ENCODE measurements at regions of chr2 and their contacts with region 1.

Region 1: DNA sequence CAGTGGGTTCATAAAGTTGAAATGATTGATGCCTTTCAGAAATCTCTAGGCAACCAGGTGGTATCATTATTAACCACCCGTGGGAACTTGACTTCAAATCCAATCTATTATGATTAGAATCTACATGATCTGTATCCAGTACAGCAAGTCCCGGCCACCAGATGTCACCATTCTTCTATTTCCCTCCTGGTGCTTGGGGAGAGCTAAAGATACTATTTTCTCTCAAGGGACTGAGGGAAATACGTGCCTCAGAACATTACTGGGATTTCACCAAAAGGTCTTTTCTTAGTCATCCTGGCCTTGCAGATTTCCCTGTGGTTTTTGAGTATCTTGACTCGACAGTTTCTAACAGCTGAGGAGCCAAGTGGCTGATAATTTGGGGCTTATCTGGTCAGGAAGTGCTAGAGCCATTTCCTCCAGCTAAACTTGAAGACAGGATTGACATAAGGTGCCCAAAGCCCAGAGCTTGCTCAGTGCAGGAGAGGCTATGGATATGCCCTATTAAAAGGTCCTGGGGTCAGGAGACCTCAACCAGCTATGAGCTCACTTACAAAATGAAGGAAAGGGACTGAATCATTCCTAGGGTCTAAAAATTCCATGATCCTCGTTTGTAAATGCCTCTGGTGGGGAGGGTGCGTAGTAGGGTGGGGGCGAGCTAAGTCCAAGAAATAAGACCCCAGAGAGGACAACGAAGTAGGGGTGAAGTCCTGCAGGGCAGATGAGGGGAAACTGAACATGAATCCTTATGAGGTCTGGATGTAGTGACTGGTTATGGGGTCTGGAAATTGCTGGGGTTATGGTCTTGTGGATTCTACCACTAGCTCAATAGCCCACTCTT is 135.4 kb upstream of the MGAT5 start:
- DNase-seq: peak; percentile 89
- H3K4me3 ChIP-seq: no peak overlapping the region
- H3K27ac ChIP-seq: peak overlapping the region in 1 of 2 donors; percentile 17
- H3K4me1 ChIP-seq: peaks cover 2% of the 10 kb centered on the region
- H3K27me3 ChIP-seq: no peaks in the 10 kb centered on the region
- CTCF ChIP-seq: peak; percentile 66 to 87 (median 86)
- POLR2A ChIP-seq: no peak

Region 2: GRCh38 chr2:133886735-133887660 is 231.5 kb before region 1 on chr2:
- intact Hi-C with region 1: loop called (anchors 5 kb)
- DNase-seq: peak; percentile 71
- H3K4me3 ChIP-seq: no peak overlapping the region
- H3K27ac ChIP-seq: no peak overlapping the region
- H3K4me1 ChIP-seq: no peaks in the 10 kb centered on the region
- H3K27me3 ChIP-seq: no peaks in the 10 kb centered on the region
- CTCF ChIP-seq: peak in 3 of 4 experiments; percentile 47 to 57 (median 56)
- POLR2A ChIP-seq: no peak

Region 3: DNA sequence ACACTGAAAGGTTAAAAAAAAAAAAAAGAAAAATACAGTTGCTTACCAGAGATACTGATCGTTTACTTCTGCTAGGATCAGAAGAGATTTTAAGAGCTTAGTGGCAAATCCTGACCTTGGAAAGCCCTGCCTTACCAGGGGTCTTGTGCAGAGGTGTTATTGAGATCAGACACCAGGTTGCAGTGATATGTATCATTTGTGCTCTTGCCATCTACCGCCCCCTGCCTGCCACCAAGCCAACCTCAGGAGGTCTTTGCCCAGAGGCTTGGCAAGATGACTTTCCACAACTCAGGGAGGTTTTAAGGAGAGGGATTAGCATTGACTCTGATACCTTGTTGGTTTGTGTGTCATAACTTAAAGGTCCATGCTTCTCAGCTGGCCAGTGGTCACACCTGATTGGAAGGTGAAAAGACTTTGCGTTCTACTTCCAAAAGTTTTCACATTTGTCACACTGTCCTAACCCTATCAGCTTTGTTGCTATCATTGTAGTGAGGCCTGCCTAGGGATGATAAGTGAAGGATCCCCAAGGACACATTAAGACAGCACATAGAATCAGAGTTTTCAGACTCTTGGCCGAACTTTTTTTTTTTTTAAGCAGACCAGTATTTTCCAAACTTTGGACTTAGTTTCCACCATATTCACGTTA is 89.2 kb after region 1 on chr2:
- intact Hi-C with region 1: loop called (anchors 5 kb)
- DNase-seq: peak; percentile 29
- H3K4me3 ChIP-seq: no peak overlapping the region
- H3K27ac ChIP-seq: no peak overlapping the region
- H3K4me1 ChIP-seq: no peaks in the 10 kb centered on the region
- H3K27me3 ChIP-seq: no peaks in the 10 kb centered on the region
- CTCF ChIP-seq: peak; percentile 13 to 61 (median 56)
- POLR2A ChIP-seq: no peak

Region 4: DNA sequence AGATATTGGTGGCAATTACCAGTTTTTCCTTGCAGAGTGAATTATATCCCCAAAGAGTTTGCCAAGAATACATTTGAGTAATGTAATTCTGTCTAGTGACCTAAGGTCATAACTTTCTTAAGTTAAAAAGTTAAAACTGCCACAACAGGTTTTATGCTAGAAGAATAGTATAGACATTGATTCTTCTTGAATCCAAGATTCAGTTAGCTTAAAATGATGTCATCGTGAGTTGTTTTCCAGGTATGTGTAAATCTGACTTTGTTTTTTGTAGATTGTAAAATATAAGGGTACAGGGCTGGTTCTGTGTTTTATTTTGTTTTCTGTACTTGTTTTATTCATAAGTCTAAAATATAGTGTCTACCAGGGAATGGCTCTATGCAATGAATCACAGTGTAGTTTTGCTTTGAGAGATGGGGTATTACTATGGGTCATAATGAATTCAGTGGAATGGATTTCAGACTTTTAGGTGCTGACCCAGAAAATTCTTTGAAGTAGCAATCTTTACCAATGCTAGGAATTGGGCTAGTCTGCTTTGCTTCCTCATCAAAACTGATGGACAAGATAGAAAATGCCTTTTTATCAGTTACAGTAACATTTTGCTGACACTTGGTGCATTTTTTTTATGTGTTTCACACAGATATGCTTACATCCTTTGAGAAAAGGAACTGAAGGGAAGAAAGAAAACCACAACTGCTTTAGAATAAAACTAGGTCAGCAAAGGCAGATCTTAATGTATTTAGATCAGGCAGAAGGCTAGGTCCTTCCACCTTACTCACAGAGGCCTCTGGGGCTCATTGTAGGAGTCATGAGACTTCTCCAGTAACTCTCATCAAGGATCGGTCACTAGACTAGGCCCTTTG is 114.6 kb after region 1 on chr2:
- intact Hi-C with region 1: no loop called
- DNase-seq: no peak
- H3K4me3 ChIP-seq: no peak overlapping the region
- H3K27ac ChIP-seq: no peak overlapping the region
- H3K4me1 ChIP-seq: no peaks in the 10 kb centered on the region
- H3K27me3 ChIP-seq: no peaks in the 10 kb centered on the region
- CTCF ChIP-seq: no peak
- POLR2A ChIP-seq: no peak

Region 5: DNA sequence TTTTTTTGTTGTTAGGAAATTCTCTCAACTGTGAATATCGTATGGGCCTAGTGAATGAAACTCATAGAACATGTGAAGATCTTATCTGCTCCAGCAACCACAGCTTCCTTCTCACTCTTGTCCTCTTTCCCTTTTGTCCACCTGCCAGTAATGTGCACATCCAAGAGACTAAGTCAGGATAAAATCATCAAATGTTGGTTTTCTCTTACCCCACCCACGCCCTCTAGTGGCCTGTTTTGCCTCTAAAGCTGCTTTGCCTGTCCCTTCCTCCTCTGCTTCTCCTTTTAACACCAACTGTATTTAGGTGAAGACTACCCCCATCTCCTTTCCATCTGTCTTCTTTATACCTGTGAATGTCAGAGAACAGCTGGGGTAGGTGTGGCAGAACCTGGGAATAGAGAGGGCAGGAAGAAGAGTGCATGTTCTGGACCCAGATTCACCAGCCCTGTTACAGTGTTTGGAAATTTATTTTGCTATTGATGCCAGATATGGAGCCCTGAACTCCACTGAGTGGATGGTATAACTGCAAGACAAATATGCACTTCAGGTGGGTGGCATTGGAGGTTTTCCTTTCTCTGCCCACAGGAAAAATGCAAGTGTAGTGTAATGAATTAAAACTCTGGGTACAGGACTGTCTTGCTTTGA is 127.0 kb after region 1 on chr2:
- intact Hi-C with region 1: loop called (anchors 5 kb)
- DNase-seq: peak; percentile 76
- H3K4me3 ChIP-seq: no peak overlapping the region
- H3K27ac ChIP-seq: no peak overlapping the region
- H3K4me1 ChIP-seq: no peaks in the 10 kb centered on the region
- H3K27me3 ChIP-seq: no peaks in the 10 kb centered on the region
- CTCF ChIP-seq: peak; percentile 51 to 69 (median 64)
- POLR2A ChIP-seq: no peak

Region 6: DNA sequence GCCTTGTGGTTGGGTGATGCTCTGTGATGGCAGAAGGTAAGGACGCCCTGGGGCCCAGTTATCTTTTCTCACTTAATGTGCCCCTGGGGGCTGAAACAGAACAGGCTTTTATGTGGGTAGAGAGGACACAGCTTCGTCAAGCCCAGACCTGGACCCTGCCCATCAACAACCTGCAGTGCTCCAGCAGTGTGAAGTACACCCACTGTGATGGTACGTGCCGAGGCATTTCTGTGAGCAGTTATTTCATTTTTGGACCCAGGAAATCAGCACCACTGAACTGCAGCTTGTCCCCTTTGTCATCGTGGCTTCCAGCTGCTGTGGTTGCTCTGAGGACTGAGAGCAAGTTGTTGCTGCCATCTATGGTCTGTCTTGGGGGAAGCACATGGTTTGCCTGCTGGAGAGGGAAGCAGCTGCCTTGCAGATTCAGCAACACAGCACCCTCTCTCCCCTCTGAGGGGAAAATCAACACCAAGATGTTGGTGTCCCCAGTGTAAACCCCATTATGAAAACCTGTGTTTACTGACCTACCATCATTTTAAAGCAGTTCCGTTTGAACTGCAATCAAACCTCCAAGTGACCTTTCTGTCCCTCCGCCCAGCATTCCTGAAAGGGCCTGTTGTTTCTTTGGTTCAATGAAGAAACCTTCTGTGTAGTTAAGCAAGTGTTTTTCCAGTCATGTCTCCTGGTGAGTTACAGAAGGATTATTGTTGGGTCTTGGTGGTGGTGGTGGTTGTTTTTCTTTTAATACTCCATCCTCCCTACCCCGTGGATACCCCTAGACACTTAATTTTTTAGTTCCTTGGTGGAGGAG is 293.5 kb after region 1 on chr2:
- intact Hi-C with region 1: loop called (anchors 1 kb)
- DNase-seq: peak; percentile 58
- H3K4me3 ChIP-seq: no peak overlapping the region
- H3K27ac ChIP-seq: no peak overlapping the region
- H3K4me1 ChIP-seq: no peaks in the 10 kb centered on the region
- H3K27me3 ChIP-seq: no peaks in the 10 kb centered on the region
- CTCF ChIP-seq: peak in 3 of 4 experiments; percentile 31 to 66 (median 63)
- POLR2A ChIP-seq: no peak

Region 7: DNA sequence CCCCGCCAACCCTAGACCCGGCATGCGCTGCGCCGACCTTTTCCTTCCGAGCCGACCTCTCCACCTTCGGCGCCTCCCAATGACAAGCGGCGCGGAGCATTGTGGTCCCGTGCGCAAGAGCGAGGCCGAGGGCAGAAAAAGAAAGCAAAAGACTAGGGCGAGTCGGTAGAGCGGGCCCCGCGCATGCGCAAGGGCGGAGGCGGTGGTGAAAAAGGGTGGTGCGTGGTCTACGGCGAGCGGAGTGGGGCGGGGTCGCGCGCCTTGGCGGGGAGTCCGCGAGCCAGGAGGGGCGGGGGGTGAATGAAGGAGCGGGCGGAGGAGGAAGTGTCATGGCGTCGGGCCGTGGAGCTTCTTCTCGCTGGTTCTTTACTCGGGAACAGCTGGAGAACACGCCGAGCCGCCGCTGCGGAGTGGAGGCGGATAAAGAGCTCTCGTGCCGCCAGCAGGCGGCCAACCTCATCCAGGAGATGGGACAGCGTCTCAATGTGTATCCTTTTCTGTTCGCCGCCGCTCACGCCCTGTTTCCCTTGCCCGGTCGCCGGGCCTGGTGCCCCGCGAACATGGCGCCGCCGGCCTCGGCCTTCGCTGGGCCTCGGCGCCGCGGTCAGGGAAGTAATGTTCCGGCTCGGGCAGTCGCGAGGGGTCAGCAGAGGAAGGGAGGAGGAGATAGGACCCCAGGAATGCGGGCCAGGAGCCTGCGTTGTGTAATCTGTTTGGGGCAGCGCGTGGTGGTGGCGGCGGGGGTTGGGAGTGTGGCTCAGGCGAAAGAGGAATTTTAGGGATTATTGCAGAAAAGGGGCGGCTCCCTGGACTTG is 800.2 kb after region 1 on chr2 and contains the start of gene CCNT2:
- intact Hi-C with region 1: loop called (anchors 10 kb)
- DNase-seq: peak; percentile 97
- H3K4me3 ChIP-seq: peak within 1 kb of the TSS; percentile 90 to 95
- H3K27ac ChIP-seq: peak within 1 kb of the TSS; percentile 97
- H3K4me1 ChIP-seq: peaks cover 12% of the 10 kb centered on the region
- H3K27me3 ChIP-seq: no peaks in the 10 kb centered on the region
- CTCF ChIP-seq: peak in 1 of 4 experiments; percentile 19
- POLR2A ChIP-seq: peak; percentile 55
- total RNA-seq, gene CCNT2: 24.1 to 34.8 TPM